Mammary epithelial cell (primary cell): ENCODE measurements at regions of chr7 and their contacts with region 1.

Region 1: DNA sequence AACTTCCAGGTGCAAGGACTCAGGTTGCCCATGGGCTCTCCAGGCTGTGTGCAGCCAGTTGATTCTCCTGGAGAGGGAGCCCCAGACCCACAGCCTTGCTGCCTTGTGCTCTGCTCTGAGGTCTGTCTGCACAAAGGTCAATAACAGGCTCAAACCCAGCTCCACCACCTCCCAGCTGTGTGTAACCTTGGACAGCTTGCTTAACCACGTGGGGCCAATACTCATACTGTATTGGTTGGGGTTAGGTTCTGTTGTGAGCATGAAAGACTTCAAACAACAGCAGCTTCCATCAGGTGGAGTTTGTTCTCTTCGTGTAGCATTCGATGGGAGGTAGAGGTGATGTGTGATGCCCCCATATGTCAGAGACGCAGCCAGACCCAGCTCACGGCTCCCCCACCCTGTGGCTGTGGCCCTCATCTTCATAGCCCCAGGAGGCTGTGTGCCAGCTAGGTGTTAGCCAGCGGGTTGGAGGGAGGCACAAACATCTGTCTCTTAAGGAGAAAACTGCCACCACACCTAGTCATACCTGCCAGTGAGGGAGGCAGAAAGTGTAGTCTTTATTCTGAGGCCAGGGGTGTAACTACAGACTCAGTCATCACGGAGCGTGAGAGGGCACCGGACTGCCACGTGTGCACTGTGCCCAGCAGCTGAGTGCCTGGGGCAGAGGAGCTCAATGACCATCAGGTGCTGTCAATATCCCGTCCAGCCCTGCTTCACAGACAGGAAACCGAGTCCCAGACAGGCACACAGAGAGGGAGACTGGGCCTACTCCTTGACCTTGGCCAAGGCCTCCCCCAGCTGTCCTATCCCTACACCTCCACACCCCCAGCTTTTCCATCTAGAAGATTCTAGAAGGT is 8.1 kb upstream of the POLD2 start:
- DNase-seq: peak; percentile 6
- H3K4me3 ChIP-seq: no peak overlapping the region
- H3K27ac ChIP-seq: no peak overlapping the region
- H3K4me1 ChIP-seq: no peaks in the 10 kb centered on the region
- H3K27me3 ChIP-seq: no peaks in the 10 kb centered on the region
- CTCF ChIP-seq: peak; percentile 35 to 58

Region 2: DNA sequence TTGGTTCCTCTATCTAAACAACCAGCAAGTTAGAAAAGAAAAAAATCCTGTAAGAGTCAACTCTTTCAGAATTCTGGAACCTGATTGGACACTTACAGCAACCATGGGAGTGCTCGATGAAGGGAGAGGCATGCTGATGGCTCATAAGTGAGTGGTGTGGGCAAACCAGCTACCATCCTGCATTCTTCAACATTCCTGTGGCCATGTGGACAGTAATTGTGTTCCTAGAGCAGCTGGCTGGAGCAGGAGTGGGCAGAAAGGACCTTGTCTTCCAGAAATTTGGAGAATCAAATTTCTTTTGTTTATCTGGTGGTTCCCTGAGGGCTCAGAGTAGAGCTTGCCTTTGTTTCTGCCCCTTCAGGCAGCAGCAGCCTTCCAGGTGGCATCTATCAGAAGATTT is 32.2 kb after region 1 on chr7:
- CTCF ChIA-PET with region 1: no interaction called
- dilution Hi-C with region 1: no loop called
- in situ Hi-C with region 1: no loop called
- intact Hi-C with region 1: loop called (anchors 2 kb)
- DNase-seq: peak; percentile 89
- H3K4me3 ChIP-seq: no peak overlapping the region
- H3K27ac ChIP-seq: peak overlapping the region; percentile 31
- H3K4me1 ChIP-seq: peaks cover 21% of the 10 kb centered on the region
- H3K27me3 ChIP-seq: no peaks in the 10 kb centered on the region
- CTCF ChIP-seq: no peak

Region 3: GRCh38 chr7:44184206-44184872 is 52.9 kb after region 1 on chr7:
- CTCF ChIA-PET with region 1: no interaction called
- dilution Hi-C with region 1: no loop called
- in situ Hi-C with region 1: no loop called
- intact Hi-C with region 1: loop called (anchors 5 kb)
- DNase-seq: peak; percentile 95
- H3K4me3 ChIP-seq: no peak overlapping the region
- H3K27ac ChIP-seq: no peak overlapping the region
- H3K4me1 ChIP-seq: peaks cover 21% of the 10 kb centered on the region
- H3K27me3 ChIP-seq: no peaks in the 10 kb centered on the region
- CTCF ChIP-seq: no peak

Region 4: DNA sequence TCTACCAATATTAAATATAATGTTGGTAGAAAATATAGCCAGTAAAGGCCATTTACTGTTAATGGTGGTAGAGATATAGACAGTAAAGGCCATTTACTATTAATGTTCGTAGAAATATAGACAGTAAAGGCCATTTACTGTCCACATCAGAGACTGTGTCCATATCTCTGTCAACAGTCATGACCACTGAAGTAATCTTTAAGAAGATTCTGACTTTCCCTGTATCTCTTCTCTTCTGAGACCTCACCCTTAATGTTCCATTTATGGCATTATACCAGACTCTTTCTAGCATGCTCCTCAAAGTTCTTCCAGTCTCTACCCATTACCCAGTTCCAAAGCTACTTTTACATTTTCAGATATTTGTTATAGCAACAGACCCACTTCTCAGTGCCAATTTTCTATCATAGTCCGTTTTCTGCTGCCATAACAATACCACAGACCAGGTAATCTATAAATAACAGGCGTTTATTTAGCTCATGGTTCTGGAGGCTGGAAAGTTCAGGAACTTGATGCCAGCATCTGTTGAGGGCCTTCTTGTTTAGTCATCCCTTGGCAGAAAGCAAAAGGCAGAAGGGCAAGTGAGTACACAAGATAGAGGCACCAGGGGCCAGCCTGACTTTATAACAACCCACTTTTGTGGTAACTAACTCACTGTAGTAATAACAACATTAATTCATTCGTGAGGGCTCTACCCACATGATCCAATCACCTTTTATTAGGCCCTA is 367.0 kb after region 1 on chr7:
- CTCF ChIA-PET with region 1: no interaction called
- dilution Hi-C with region 1: no loop called
- in situ Hi-C with region 1: no loop called
- intact Hi-C with region 1: no loop called
- DNase-seq: no peak
- H3K4me3 ChIP-seq: no peak overlapping the region
- H3K27ac ChIP-seq: no peak overlapping the region
- H3K4me1 ChIP-seq: no peaks in the 10 kb centered on the region
- H3K27me3 ChIP-seq: no peaks in the 10 kb centered on the region
- CTCF ChIP-seq: no peak